ENCODE measurements at regions of chr7 and their contacts with region 1.

Region 1: DNA sequence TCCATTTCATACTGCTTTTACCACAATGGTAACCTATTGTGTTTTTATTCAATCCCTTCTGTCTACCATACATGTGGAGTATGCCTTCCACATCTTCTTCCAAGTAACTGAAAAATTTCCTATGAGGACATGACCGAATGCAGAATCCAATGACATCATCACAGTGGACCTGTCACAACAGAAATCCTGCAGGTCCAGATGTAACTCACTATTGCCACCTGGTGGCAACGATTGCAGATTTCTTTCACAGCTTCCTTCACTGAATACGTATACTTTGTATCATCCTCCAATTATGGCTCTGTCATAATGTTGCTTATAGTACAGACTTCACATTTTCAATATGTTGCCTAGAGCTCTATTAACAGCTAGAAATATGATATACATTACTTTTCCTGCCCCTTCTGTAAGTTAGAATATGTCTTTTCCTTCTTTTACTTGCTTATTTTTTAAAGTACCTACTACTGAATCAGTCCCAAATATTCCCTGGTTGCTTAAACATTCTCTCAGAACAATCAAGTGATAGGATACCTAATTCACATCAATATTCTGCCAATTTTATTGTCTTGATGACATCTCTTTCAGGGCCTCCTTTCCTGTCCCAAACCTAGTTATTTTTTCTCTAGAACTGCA is 45.4 kb downstream of the SLC13A1 start:
- DNase-seq: peak; percentile 71
- H3K4me3 ChIP-seq: no peak overlapping the region
- H3K27ac ChIP-seq: peak overlapping the region in 1 of 4 donors; percentile 9
- H3K4me1 ChIP-seq: no peaks in the 10 kb centered on the region
- H3K27me3 ChIP-seq: no peaks in the 10 kb centered on the region
- CTCF ChIP-seq: peak in 3 of 4 experiments; percentile 50 to 62 (median 50)
- EP300 ChIP-seq: no peak
- POLR2A ChIP-seq: no peak

Region 2: GRCh38 chr7:122225874-122226273 is 928.5 kb before region 1 on chr7:
- intact Hi-C with region 1: loop called (anchors 10 kb)
- DNase-seq: no peak
- H3K4me3 ChIP-seq: no peak overlapping the region
- H3K27ac ChIP-seq: no peak overlapping the region
- H3K4me1 ChIP-seq: no peaks in the 10 kb centered on the region
- H3K27me3 ChIP-seq: no peaks in the 10 kb centered on the region
- CTCF ChIP-seq: no peak
- EP300 ChIP-seq: no peak
- POLR2A ChIP-seq: no peak

Region 3: GRCh38 chr7:122886357-122887081 is 267.8 kb before region 1 on chr7 and contains the start of gene CADPS2:
- intact Hi-C with region 1: loop called (anchors 2 kb)
- DNase-seq: peak; percentile 93
- H3K4me3 ChIP-seq: peak within 1 kb of the TSS; percentile 64 to 89 (median 72)
- H3K27ac ChIP-seq: peak within 1 kb of the TSS; percentile 80 to 95 (median 86)
- H3K4me1 ChIP-seq: peaks cover 0 to 13% (median 6%) of the 10 kb centered on the region in 4 donors
- H3K27me3 ChIP-seq: no peaks in the 10 kb centered on the region
- CTCF ChIP-seq: peak in 3 of 4 experiments; percentile 17 to 36 (median 19)
- EP300 ChIP-seq: no peak
- POLR2A ChIP-seq: peak; percentile 41 to 44
- total RNA-seq, gene CADPS2: 7.2 to 13.0 (median 10.4) TPM